ENCODE measurements at regions of chr12 and their contacts with region 1.

Region 1: DNA sequence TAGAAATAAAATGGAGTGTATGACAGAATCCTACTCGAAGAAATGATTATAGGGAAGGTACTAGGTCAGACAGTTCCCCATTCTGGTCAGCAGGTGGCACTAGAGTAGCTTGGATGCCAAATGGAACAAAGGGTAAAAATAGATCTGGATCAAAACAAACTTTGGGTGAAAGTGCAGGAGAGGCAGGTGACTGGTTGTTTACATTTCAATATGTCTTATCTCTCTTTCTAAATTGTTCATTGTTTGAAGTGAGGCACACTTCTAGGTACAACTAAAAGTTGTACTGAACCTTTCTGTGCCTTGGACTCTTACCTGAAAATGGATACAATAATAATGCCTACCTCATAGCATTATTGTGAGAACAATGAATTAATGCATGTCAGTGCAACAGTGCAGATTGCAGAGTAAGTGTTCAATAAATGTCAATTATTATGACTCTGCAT is 62.0 kb upstream of the OSBPL8 start:
- DNase-seq: peak; percentile 89
- H3K4me3 Mint-ChIP-seq: no peak overlapping the region
- H3K27ac Mint-ChIP-seq: no peak overlapping the region
- H3K4me1 Mint-ChIP-seq: peaks cover 4% of the 10 kb centered on the region
- H3K27me3 Mint-ChIP-seq: peaks cover 3% of the 10 kb centered on the region

Region 2: GRCh38 chr12:76790564-76791552 is 169.3 kb after region 1 on chr12:
- intact Hi-C with region 1: loop called (anchors 1 kb)
- DNase-seq: no peak
- H3K4me3 Mint-ChIP-seq: no peak overlapping the region
- H3K27ac Mint-ChIP-seq: no peak overlapping the region
- H3K4me1 Mint-ChIP-seq: peaks cover 2% of the 10 kb centered on the region
- H3K27me3 Mint-ChIP-seq: no peaks in the 10 kb centered on the region

Region 3: DNA sequence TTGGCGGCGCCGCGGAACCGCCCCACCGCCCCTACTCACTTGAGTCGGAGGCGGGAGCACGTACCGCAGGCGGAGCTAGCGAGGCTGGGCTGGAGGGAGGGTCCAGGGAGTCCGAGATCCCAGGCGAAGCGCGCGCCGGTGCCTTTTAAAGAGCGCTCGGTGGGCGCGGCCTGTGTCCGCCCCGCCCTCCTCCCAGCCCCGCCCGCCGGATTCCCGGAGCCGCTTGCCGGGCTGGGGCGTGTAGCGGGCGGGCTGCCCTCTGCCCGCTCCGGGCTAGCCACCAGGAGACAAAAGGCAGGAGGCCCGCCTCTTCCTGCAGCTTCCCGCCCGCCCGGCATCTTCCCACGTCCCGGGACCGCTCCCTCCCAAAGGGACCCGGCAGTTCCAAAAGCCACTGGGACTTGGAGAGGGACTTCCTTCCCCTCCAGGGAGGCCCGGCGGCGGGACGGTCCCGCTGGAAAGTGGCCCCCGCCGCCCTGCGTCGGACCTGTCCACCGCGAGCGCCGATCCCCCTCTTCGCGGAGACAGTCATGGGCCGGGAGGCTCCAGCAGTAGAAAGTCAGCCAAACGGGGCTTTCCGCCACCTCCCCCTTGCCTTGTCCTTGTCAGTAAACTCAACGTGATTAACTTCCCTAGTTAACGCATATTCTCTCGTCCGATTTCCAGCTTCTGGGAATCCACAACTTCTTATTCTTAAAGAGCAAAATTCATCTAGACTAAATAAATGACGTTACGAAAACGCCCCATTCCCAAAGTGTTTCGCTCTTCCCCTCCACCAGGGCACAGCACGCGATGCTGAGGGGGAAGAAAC is 257.5 kb after region 1 on chr12 and contains the start of gene CSRP2:
- intact Hi-C with region 1: loop called (anchors 5 kb)
- DNase-seq: peak; percentile 89
- H3K4me3 Mint-ChIP-seq: peak within 1 kb of the TSS; percentile 93
- H3K27ac Mint-ChIP-seq: peak within 1 kb of the TSS; percentile 52
- H3K4me1 Mint-ChIP-seq: peaks cover 8% of the 10 kb centered on the region
- H3K27me3 Mint-ChIP-seq: peaks cover 61% of the 10 kb centered on the region
- total RNA-seq, gene CSRP2: 0.44 and 0.80 TPM in 2 replicates

Region 4: DNA sequence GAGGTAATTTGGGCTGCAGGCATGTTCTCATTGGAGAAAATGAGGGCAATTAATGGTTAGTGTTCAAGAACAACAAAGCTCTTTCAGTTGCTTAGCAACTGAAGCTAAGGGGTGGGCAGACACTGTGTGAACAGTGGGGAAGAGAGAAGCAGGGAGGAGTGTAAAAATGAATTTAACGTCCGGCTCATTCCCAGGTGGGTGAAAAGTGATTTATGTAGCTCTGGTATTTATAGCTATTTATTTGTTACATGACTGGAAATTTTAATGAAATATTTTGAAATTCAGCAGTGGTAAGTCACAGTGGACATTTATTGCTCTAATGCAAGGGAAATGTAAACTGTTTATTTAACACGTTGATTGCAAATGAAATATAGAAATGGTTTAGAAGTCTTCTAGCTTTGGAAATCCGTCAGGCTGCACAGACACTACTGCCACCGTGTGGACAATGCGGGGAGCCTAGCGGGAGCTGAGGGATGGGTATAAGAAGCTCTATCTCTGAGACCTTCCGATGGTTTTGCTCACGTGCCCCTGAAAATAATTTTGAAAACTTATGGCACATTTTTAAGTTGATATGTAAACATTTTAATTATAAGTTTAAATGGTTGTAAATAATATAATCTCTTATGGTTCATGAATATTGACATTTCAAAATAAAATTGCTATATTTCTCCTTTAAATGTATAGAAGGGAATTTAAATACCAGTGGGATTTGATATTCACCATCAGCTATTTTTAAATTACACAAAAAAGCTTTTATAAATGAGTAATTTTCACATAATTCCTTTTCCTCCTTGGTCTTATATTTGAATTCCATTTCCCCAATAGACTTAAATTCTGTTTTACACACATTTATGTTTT is 389.3 kb after region 1 on chr12:
- intact Hi-C with region 1: loop called (anchors 1 kb)
- DNase-seq: peak; percentile 90
- H3K4me3 Mint-ChIP-seq: no peak overlapping the region
- H3K27ac Mint-ChIP-seq: no peak overlapping the region
- H3K4me1 Mint-ChIP-seq: peaks cover 2% of the 10 kb centered on the region
- H3K27me3 Mint-ChIP-seq: peaks cover 7% of the 10 kb centered on the region

Measured in activated CD4-positive, alpha-beta T cell treated with anti-CD3 and anti-CD28 coated beads, Interleukin-2, amount 10 ng/mL, durations not matched to agents 24 days and 14 days (primary cell).